Activated CD8-positive, alpha-beta T cell treated with anti-CD3 and anti-CD28 coated beads for 36 hours (primary cell): ENCODE measurements at regions of chr18 and their contacts with region 1.

Region 1: GRCh38 chr18:79400091-79400590 is 4.4 kb downstream of the NFATC1 start:
- DNase-seq: peak; percentile 78
- ATAC-seq: no peak
- H3K4me3 Mint-ChIP-seq: peak overlapping the region; percentile 94
- H3K27ac Mint-ChIP-seq: no peak overlapping the region
- H3K4me1 Mint-ChIP-seq: peaks cover 42% of the 10 kb centered on the region
- H3K27me3 Mint-ChIP-seq: no peaks in the 10 kb centered on the region
- CTCF ChIP-seq: no peak

Region 2: GRCh38 chr18:79334496-79335233 is 65.5 kb before region 1 on chr18:
- CTCF ChIA-PET with region 1: no interaction called
- POLR2A ChIA-PET with region 1: no interaction called
- intact Hi-C with region 1: no loop called
- DNase-seq: no peak
- ATAC-seq: no peak
- H3K4me3 Mint-ChIP-seq: no peak overlapping the region
- H3K27ac Mint-ChIP-seq: no peak overlapping the region
- H3K4me1 Mint-ChIP-seq: no peaks in the 10 kb centered on the region
- H3K27me3 Mint-ChIP-seq: no peaks in the 10 kb centered on the region
- CTCF ChIP-seq: no peak

Region 3: DNA sequence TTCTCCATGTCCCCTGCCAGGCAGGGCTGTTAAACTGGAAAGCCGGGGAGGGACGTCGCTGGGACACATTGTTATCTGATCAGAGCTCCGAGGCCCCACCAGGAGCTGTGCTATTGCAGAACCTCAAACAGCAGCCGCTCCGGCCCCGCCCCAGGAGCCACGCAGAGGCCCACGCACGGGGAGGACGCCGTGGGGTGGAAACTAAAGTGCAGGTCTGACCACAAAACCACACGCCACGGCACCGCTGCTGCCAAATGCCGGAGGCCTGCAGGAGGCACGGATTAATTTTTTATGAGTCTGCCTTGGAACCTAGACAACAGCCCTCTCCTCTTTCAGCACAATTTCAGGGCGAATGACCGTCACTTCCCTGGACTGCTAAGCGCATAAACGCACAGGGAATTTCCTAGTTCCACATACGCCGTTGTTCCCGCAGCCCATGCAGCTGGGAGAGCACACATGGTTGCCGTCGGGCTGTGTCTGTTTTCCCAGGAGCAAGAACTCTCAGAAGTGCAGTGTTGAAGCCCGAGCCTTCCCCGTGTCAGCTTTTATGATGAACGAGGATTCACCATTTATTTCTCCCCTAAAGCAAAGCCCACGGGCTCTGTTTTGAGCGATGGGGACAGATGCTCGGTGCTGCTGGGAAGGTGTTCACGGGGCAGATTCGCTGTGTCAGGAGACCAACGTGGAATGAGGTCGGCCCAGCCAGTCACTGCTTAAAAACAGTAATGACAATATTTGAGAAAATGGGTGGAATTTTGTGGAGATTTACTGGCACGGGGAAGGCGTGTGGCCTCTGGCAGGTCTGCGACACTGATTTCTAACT is 39.3 kb after region 1 on chr18:
- CTCF ChIA-PET with region 1: interaction called, 4 read pairs
- POLR2A ChIA-PET with region 1: interaction called, 9 read pairs
- intact Hi-C with region 1: loop called (anchors 5 kb)
- DNase-seq: peak; percentile 43
- ATAC-seq: peak; percentile 19
- H3K4me3 Mint-ChIP-seq: no peak overlapping the region
- H3K27ac Mint-ChIP-seq: no peak overlapping the region
- H3K4me1 Mint-ChIP-seq: peaks cover 59% of the 10 kb centered on the region
- H3K27me3 Mint-ChIP-seq: no peaks in the 10 kb centered on the region
- CTCF ChIP-seq: no peak